Activated CD4-positive, alpha-beta T cell treated with anti-CD3 and anti-CD28 coated beads, Interleukin-2, amount 10 ng/mL, durations not matched to agents 7 days and 5 days (primary cell): ENCODE measurements at regions of chr16 and their contacts with region 1.

Region 1: GRCh38 chr16:66830422-66831404 is at the start of gene NAE1:
- DNase-seq: peak; percentile 87
- H3K4me3 Mint-ChIP-seq: peak within 1 kb of the TSS; percentile 69
- H3K27ac Mint-ChIP-seq: peak within 1 kb of the TSS; percentile 83
- H3K4me1 Mint-ChIP-seq: peaks cover 35% of the 10 kb centered on the region
- H3K27me3 Mint-ChIP-seq: no peaks in the 10 kb centered on the region
- total RNA-seq, gene NAE1: 62.5 to 72.6 TPM

Region 2: GRCh38 chr16:66814734-66815133 is 16.0 kb before region 1 on chr16:
- CTCF ChIA-PET with region 1: interaction called, 17 read pairs
- POLR2A ChIA-PET with region 1: no interaction called
- DNase-seq: no peak
- H3K4me3 Mint-ChIP-seq: no peak overlapping the region
- H3K27ac Mint-ChIP-seq: no peak overlapping the region
- H3K4me1 Mint-ChIP-seq: no peaks in the 10 kb centered on the region
- H3K27me3 Mint-ChIP-seq: no peaks in the 10 kb centered on the region

Region 3: GRCh38 chr16:66844342-66845079 is 13.8 kb after region 1 on chr16 and contains the start of gene CA7:
- CTCF ChIA-PET with region 1: interaction called, 36 read pairs
- POLR2A ChIA-PET with region 1: no interaction called
- DNase-seq: no peak
- H3K4me3 Mint-ChIP-seq: peak within 1 kb of the TSS; percentile 41
- H3K27ac Mint-ChIP-seq: no peak within 1 kb of the TSS
- H3K4me1 Mint-ChIP-seq: peaks cover 29% of the 10 kb centered on the region
- H3K27me3 Mint-ChIP-seq: peaks cover 52% of the 10 kb centered on the region
- total RNA-seq, gene CA7: not detected

Region 4: GRCh38 chr16:66850115-66850815 is 19.6 kb after region 1 on chr16:
- CTCF ChIA-PET with region 1: interaction called, 36 read pairs
- POLR2A ChIA-PET with region 1: no interaction called
- DNase-seq: no peak
- H3K4me3 Mint-ChIP-seq: no peak overlapping the region
- H3K27ac Mint-ChIP-seq: no peak overlapping the region
- H3K4me1 Mint-ChIP-seq: peaks cover 21% of the 10 kb centered on the region
- H3K27me3 Mint-ChIP-seq: peaks cover 18% of the 10 kb centered on the region

Region 5: GRCh38 chr16:66858740-66859396 is 28.2 kb after region 1 on chr16:
- CTCF ChIA-PET with region 1: interaction called, 30 read pairs
- POLR2A ChIA-PET with region 1: no interaction called
- DNase-seq: no peak
- H3K4me3 Mint-ChIP-seq: no peak overlapping the region
- H3K27ac Mint-ChIP-seq: no peak overlapping the region
- H3K4me1 Mint-ChIP-seq: no peaks in the 10 kb centered on the region
- H3K27me3 Mint-ChIP-seq: peaks cover 2% of the 10 kb centered on the region

Region 6: GRCh38 chr16:66872943-66873684 is 42.4 kb after region 1 on chr16:
- CTCF ChIA-PET with region 1: interaction called, 32 read pairs
- POLR2A ChIA-PET with region 1: no interaction called
- DNase-seq: peak; percentile 92
- H3K4me3 Mint-ChIP-seq: peak overlapping the region; percentile 61
- H3K27ac Mint-ChIP-seq: peak overlapping the region; percentile 83
- H3K4me1 Mint-ChIP-seq: peaks cover 37% of the 10 kb centered on the region
- H3K27me3 Mint-ChIP-seq: no peaks in the 10 kb centered on the region

Region 7: DNA sequence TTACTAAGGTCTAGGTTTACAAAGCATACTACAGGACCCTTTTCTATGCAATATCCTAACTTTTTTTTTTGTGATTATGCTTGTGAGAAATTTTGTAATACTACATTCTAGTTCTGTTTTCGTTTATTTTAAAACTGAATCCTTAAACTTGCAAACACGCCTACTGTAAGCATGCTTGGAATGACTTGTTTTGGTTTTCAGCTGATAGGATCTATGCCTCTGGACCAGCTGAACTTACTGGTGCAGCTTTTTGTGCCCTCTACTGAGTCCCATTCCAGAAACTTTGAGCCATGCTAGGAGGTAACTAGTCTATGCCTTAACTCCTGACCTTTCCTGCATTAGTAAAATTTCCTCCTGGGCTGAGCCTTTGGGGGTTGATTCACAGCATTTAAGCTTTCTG is 55.6 kb after region 1 on chr16:
- CTCF ChIA-PET with region 1: no interaction called
- POLR2A ChIA-PET with region 1: interaction called, 11 read pairs
- DNase-seq: no peak
- H3K4me3 Mint-ChIP-seq: no peak overlapping the region
- H3K27ac Mint-ChIP-seq: no peak overlapping the region
- H3K4me1 Mint-ChIP-seq: peaks cover 36% of the 10 kb centered on the region
- H3K27me3 Mint-ChIP-seq: no peaks in the 10 kb centered on the region